Mammary epithelial cell (primary cell): ENCODE measurements at regions of chr12 and their contacts with region 1.

Region 1: GRCh38 chr12:15772405-15773018 is 16.7 kb downstream of the EPS8 start:
- DNase-seq: no peak
- H3K4me3 ChIP-seq: no peak overlapping the region
- H3K27ac ChIP-seq: no peak overlapping the region
- H3K4me1 ChIP-seq: peaks cover 7% of the 10 kb centered on the region
- H3K27me3 ChIP-seq: no peaks in the 10 kb centered on the region
- CTCF ChIP-seq: peak; percentile 60 to 66

Region 2: GRCh38 chr12:15590180-15590826 is 182.2 kb before region 1 on chr12:
- CTCF ChIA-PET with region 1: no interaction called
- dilution Hi-C with region 1: no loop called
- in situ Hi-C with region 1: no loop called
- intact Hi-C with region 1: loop called (anchors 1 kb)
- DNase-seq: peak; percentile 73
- H3K4me3 ChIP-seq: peak overlapping the region; percentile 51 to 54 (median 52)
- H3K27ac ChIP-seq: peak overlapping the region; percentile 6
- H3K4me1 ChIP-seq: peaks cover 5% of the 10 kb centered on the region
- H3K27me3 ChIP-seq: no peaks in the 10 kb centered on the region
- CTCF ChIP-seq: peak; percentile 78 to 90

Region 3: DNA sequence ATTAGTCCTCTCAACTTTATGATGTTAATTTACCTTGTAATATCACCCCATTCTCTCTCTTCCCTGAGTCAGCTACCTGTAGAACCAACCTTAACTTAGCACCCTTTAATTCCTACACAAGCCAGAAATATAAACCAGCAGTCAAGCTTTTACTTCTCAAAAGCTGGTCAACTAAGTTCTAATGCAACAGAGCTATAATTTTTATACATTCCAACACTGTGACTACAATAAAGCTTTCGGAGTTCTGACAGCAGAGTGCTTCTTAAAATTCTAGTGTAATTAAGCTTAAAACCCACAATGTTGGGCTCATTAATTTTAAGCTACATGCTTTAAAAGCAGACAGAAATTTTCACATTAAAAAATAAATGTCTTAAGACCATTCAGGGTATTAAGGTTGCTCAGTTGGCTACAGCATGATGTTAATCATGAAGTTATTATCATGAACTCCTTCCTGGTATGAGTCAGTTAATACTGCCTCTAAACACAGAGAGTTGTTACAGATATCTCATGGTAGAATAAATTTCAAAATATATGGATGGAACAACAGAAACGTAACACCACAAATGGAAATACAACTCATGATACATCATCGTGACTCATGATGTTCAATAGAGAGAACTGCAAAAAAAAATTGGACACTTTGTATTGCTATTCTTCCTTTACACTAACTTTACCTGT is 110.1 kb before region 1 on chr12:
- CTCF ChIA-PET with region 1: interaction called, 14 read pairs
- dilution Hi-C with region 1: no loop called
- in situ Hi-C with region 1: no loop called
- intact Hi-C with region 1: no loop called
- DNase-seq: peak; percentile 93
- H3K4me3 ChIP-seq: peak overlapping the region in 1 of 3 experiments; percentile 24
- H3K27ac ChIP-seq: peak overlapping the region; percentile 90
- H3K4me1 ChIP-seq: peaks cover 14% of the 10 kb centered on the region
- H3K27me3 ChIP-seq: no peaks in the 10 kb centered on the region
- CTCF ChIP-seq: no peak